CD4-positive, alpha-beta memory T cell (primary cell): ENCODE measurements at regions of chr12 and their contacts with region 1.

Region 1: DNA sequence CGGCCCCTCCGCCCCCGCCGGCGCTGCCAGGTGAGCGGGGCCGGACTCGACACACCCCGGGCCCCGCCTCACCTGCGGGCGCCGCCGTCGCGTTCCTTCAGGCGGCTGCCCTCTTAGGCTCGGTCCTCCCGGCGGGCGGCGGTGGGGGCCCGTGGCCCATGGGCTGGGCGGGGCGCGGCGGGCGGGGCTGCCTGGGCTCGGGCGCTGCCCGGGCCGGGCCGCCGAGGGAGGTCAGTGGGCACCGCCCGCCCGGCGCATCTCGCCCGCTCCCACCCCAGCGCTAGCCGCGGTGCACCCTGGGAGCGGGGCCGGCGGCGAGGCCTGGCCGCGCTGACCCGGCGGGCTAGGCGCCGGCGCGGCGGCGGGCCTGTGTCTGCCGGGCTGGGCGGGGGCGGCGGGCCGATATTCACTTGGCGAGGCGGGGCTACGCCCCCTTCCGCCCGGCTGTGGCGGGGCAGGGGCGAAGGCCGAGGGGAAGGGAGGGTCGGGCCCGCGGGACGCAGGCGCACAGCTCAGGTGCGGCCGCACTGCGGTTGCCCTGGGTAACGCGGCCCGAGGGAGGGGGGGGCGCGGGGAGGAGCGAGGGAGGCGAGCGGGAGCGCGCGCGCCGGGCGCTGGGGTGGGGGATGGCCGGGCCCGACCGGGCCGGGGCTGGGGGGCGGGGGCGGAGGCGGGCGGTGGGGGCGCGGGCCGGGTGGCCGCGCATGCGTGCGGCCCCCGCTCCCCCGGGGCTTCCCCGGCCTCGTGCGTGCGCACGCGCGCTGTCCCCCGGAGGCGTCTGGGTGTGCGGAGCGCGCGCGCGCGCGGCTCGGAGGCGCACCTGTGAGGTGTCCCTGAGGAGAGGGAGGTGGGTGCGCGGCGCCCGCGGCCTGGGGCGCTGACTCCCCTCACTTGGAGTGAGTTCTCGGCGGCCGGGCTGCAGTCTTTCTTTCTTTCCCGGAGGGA is at the starts of genes CCDC92 and ZNF664:
- DNase-seq: peak; percentile 91 to 96 (median 94)
- H3K4me3 ChIP-seq: peak within 1 kb of the TSS; percentile 2 to 54
- H3K4me3 Mint-ChIP-seq: peak within 1 kb of the TSS; percentile 91 to 98 (median 94)
- H3K27ac ChIP-seq: peak within 1 kb of the TSS; percentile 44
- H3K27ac Mint-ChIP-seq: peak within 1 kb of the TSS; percentile 91 to 99 (median 95)
- H3K4me1 ChIP-seq: peaks cover 21% of the 10 kb centered on the region
- H3K4me1 Mint-ChIP-seq: peaks cover 26 to 48% (median 31%) of the 10 kb centered on the region in 4 donors
- H3K27me3 ChIP-seq: no peaks in the 10 kb centered on the region
- H3K27me3 Mint-ChIP-seq: no peaks in the 10 kb centered on the region
- total RNA-seq, gene CCDC92: 32.1 to 35.6 TPM
- total RNA-seq, gene ZNF664: 54.0 to 57.9 TPM

Region 2: GRCh38 chr12:123938679-123939480 is 33.8 kb before region 1 on chr12:
- CTCF ChIA-PET with region 1: interaction called, 4 read pairs
- POLR2A ChIA-PET with region 1: interaction called, 11 read pairs
- intact Hi-C with region 1: loop called (anchors 2 kb)
- DNase-seq: no peak
- H3K4me3 ChIP-seq: peak overlapping the region in 1 of 2 donors; percentile 22
- H3K4me3 Mint-ChIP-seq: peak overlapping the region; percentile 76 to 88 (median 80)
- H3K27ac ChIP-seq: peak overlapping the region; percentile 42
- H3K27ac Mint-ChIP-seq: peak overlapping the region; percentile 88 to 98 (median 91)
- H3K4me1 ChIP-seq: peaks cover 22% of the 10 kb centered on the region
- H3K4me1 Mint-ChIP-seq: peaks cover 17 to 35% (median 30%) of the 10 kb centered on the region in 4 donors
- H3K27me3 ChIP-seq: no peaks in the 10 kb centered on the region
- H3K27me3 Mint-ChIP-seq: no peaks in the 10 kb centered on the region